ENCODE measurements at regions of chr22 and their contacts with region 1.

Region 1: GRCh38 chr22:38700789-38701628 is at the start of gene JOSD1:
- DNase-seq: peak; percentile 98
- H3K4me3 ChIP-seq: peak within 1 kb of the TSS; percentile 62 to 83 (median 80)
- H3K27ac ChIP-seq: peak within 1 kb of the TSS; percentile 93 to 99 (median 98)
- H3K4me1 ChIP-seq: peaks cover 24 to 56% (median 49%) of the 10 kb centered on the region in 4 donors
- H3K27me3 ChIP-seq: no peaks in the 10 kb centered on the region
- CTCF ChIP-seq: peak in 1 of 5 experiments; percentile 43
- EP300 ChIP-seq: peak; percentile 94
- POLR2A ChIP-seq: peak; percentile 89
- total RNA-seq, gene JOSD1: 34.6 to 189 (median 138) TPM

Region 2: DNA sequence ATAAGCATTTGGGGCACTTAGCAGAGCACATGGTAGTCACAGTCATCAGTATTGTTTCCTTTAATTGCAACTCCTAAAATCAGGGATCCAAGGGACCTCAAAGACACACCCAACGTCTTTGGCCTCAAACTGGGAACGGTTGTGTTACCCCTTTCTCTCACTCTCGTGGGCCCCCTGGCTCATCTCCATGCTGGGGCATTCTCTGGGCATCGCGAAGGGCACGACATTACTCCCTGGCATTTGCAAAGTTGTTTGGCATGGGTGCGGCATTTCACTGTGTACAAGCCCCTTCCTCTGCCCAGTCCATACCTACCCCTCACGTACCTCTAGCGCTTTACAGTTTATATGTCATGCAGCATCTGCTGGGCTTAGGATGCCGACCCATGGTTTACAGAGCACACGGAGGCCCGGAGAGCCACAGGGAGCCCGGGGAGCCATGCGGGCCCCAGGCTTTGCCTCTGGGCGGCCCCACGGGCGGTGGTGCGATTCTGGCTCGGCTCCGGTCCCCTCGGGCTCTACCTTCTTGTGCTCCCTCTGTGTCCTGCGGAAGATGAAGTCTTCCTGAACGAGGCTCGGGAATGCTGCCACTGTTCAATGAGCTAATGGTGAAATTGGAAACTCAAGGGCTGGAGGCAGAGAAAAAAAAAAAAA is 1975.5 kb before region 1 on chr22:
- in situ Hi-C with region 1: no loop called
- intact Hi-C with region 1: no loop called
- DNase-seq: no peak
- H3K4me3 ChIP-seq: no peak overlapping the region
- H3K27ac ChIP-seq: no peak overlapping the region
- H3K4me1 ChIP-seq: no peaks in the 10 kb centered on the region
- H3K27me3 ChIP-seq: peaks cover 44% of the 10 kb centered on the region
- CTCF ChIP-seq: no peak
- EP300 ChIP-seq: no peak
- POLR2A ChIP-seq: no peak

Region 3: DNA sequence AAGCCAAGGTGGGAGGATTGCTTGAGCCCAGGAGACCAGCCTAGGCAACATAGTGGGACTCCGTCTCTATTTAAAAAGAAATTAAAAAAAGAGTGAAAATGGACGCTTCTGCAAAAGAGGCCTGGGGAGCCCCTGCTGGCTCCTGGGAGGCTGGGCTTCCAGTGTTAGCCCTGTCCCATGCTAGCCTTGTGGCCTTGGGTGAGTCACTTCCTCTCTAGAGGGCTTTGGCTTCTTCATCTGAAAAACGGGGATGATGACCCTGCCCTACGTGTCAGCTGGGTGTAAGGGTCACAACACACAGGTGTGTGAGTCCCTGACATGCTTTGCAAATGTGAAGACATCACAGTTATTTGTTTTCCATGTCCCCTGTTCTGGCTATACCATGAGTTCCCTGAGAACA is 77.7 kb before region 1 on chr22:
- in situ Hi-C with region 1: no loop called
- intact Hi-C with region 1: no loop called
- DNase-seq: no peak
- H3K4me3 ChIP-seq: no peak overlapping the region
- H3K27ac ChIP-seq: no peak overlapping the region
- H3K4me1 ChIP-seq: no peaks in the 10 kb centered on the region
- H3K27me3 ChIP-seq: no peaks in the 10 kb centered on the region
- CTCF ChIP-seq: no peak
- EP300 ChIP-seq: no peak
- POLR2A ChIP-seq: no peak

Region 4: GRCh38 chr22:38755911-38756532 is 55.0 kb after region 1 on chr22 and contains the start of gene SUN2:
- in situ Hi-C with region 1: no loop called
- intact Hi-C with region 1: loop called (anchors 2 kb)
- DNase-seq: peak; percentile 96
- H3K4me3 ChIP-seq: peak within 1 kb of the TSS; percentile 58 to 82 (median 68)
- H3K27ac ChIP-seq: peak within 1 kb of the TSS; percentile 93 to 98 (median 96)
- H3K4me1 ChIP-seq: peaks cover 12 to 44% (median 33%) of the 10 kb centered on the region in 4 donors
- H3K27me3 ChIP-seq: no peaks in the 10 kb centered on the region
- CTCF ChIP-seq: no peak
- EP300 ChIP-seq: no peak
- POLR2A ChIP-seq: peak; percentile 35
- total RNA-seq, gene SUN2: 168 to 523 (median 216) TPM

Region 5: DNA sequence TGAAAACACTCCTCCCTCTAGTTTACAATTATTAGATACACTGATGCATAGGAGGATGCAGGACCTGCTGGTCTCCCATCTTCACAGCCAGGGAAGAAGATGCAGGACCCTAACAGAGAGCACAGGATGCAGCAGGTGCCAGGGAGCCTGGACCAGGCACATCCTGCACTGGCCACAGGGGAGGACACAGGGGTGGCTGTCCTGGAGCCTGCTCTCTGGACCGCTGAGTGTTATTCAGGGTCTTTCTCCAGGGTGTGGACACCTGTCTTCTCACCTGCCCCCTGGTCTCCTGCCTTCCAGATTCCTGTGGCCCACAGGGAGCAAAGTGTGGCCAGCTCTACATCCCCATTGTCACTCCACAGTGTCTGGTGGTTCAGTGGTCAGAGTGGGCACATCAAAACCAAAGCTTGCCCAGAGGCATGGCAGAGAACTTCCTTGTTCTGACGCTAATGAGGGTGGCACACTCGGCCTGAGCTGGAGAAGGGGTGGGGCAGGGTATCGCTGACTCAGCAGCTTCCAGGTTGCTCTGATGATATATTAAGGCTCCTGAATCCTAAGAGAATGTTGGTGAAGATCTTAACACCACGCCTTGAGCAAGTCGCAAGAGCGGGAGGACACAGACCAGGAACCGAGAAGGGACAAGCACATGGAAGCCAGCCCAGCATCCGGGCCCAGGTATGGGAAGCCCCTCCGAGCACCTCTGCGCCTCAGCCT is 256.2 kb after region 1 on chr22 and contains the start of gene APOBEC3A:
- in situ Hi-C with region 1: no loop called
- intact Hi-C with region 1: no loop called
- DNase-seq: peak; percentile 82
- H3K4me3 ChIP-seq: no peak within 1 kb of the TSS
- H3K27ac ChIP-seq: no peak within 1 kb of the TSS
- H3K4me1 ChIP-seq: peaks cover 2 to 30% (median 16%) of the 10 kb centered on the region in 4 donors
- H3K27me3 ChIP-seq: no peaks in the 10 kb centered on the region
- CTCF ChIP-seq: no peak
- EP300 ChIP-seq: no peak
- POLR2A ChIP-seq: no peak
- total RNA-seq, gene APOBEC3A: 2.7 to 3.0 TPM in 2 of 4 donors, not detected in the others